ENCODE measurements at regions of chr3 and their contacts with region 1.

Region 1: DNA sequence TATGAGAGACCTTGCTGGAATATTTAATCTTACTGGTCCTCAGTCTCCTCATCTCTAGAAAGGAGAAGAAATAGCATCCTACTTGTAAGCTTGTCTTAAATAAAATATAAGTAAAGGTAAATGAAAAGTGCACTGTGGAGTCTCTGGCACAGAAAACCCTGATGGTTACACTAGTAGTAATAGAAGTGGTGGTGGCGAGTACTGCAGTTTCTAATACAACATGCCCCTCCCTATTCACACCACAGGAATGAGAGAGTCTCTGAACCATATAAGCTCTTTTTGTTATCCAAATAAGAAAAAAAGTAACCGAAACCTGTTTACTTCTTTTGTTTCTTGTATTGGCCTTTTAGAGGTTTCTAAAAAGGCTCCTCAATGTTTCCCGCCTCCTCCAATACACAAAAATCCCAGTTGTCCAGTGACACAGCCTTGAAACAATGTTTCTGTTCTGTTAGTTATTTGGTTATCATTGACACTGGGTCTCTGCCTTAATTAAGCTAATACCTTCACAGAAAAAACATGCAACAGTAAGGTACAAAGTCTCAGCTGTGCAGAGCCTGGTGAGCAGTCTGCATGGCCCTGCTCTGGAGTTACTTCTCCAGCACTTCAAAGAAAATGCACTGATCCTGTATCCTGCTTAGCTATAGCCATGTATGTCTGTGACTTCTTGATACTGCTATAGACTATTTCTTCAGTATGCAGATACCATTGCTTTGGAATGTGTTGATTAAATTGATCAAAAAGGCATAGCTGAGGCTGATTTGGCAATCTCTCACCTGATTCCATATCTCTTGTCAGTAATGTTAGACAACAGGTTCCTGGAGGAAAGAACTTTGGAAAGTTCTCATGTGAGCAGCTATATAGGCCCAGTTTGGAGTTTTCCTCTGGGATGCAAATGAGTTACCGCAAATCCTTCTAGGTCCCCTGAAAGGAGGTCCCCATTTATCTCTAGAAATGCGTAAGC is 315.6 kb upstream of the IL12A start:
- DNase-seq: no peak
- ATAC-seq: no peak
- H3K4me3 ChIP-seq: no peak overlapping the region
- H3K27ac ChIP-seq: no peak overlapping the region
- H3K4me1 ChIP-seq: peaks cover 0 to 21% (median 4%) of the 10 kb centered on the region in 9 donors
- H3K27me3 ChIP-seq: no peaks in the 10 kb centered on the region
- CTCF ChIP-seq: no peak

Region 2: DNA sequence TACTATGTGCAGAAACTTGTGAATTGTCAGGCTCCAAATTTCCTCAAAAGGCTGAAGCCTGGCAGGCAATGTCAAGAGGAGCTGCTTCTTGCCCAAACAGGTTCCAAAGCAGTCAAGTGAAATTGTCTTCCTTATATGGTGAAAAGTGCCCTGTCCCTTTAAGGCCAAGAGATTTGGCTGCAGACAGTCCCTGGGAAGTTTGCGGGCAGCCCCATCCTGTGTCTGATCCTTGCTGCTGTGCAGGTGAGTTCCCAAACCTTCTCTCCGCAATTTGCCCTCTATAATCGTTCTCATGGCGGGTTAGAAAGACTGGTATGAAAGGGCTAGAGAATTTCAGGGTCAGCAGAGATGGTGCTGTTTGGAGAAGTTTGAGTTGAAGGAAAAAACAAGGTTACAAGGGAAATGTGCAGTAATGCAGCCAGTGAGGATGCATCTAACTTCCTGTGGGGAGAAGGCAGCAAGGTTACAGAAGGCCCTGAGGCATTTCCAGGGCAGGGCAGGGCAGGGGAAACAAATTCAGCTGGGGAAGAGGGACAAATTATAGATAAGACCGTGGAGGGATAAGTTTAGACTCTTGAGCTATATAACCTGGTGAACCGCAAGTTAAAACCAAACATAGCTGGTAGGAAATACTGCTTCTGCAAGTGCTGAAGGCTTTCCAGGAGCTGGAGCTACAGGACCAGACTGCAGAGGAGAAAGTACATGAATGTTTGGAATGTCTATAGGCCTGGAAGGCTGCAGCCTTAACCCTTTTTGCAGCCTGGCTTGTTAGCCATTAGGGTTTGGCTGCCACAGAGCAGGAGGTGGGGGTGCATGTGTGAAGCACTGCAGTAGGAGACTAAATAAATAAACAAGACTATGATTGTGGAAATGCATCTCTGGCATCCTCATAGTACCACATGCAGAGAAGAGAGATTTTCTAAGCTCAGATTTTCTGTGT is 59.4 kb after region 1 on chr3:
- intact Hi-C with region 1: loop called in 1 of 10 experiments (anchors 10 kb)
- DNase-seq: no peak
- ATAC-seq: peak; percentile 74 to 92 (median 84)
- H3K4me3 ChIP-seq: peak overlapping the region in 9 of 10 donors; percentile 3 to 48 (median 34)
- H3K27ac ChIP-seq: peak overlapping the region in 9 of 10 donors; percentile 2 to 67 (median 53)
- H3K4me1 ChIP-seq: peaks cover 0 to 20% (median 13%) of the 10 kb centered on the region in 9 donors
- H3K27me3 ChIP-seq: no peaks in the 10 kb centered on the region
- CTCF ChIP-seq: peak in 4 of 9 donors; percentile 11 to 47 (median 36)

Measured in heart right ventricle (tissue), 16 donors.